ENCODE measurements at regions of chr1 and their contacts with region 1.

Region 1: GRCh38 chr1:61757945-61758344 is 15.7 kb downstream of the PATJ start:
- DNase-seq: no peak
- H3K4me3 ChIP-seq: no peak overlapping the region
- H3K27ac ChIP-seq: no peak overlapping the region; the same call in 1 of the 2 replicates
- H3K4me1 ChIP-seq: peaks cover 23% of the 10 kb centered on the region
- H3K27me3 ChIP-seq: no peaks in the 10 kb centered on the region
- CTCF ChIP-seq: no peak

Region 2: GRCh38 chr1:61404597-61405376 is 353.2 kb before region 1 on chr1:
- CTCF ChIA-PET with region 1: no interaction called
- POLR2A ChIA-PET with region 1: no interaction called
- intact Hi-C with region 1: loop called (anchors 5 kb)
- DNase-seq: no peak
- H3K4me3 ChIP-seq: no peak overlapping the region
- H3K27ac ChIP-seq: no peak overlapping the region
- H3K4me1 ChIP-seq: no peaks in the 10 kb centered on the region
- H3K27me3 ChIP-seq: no peaks in the 10 kb centered on the region
- CTCF ChIP-seq: no peak

Region 3: DNA sequence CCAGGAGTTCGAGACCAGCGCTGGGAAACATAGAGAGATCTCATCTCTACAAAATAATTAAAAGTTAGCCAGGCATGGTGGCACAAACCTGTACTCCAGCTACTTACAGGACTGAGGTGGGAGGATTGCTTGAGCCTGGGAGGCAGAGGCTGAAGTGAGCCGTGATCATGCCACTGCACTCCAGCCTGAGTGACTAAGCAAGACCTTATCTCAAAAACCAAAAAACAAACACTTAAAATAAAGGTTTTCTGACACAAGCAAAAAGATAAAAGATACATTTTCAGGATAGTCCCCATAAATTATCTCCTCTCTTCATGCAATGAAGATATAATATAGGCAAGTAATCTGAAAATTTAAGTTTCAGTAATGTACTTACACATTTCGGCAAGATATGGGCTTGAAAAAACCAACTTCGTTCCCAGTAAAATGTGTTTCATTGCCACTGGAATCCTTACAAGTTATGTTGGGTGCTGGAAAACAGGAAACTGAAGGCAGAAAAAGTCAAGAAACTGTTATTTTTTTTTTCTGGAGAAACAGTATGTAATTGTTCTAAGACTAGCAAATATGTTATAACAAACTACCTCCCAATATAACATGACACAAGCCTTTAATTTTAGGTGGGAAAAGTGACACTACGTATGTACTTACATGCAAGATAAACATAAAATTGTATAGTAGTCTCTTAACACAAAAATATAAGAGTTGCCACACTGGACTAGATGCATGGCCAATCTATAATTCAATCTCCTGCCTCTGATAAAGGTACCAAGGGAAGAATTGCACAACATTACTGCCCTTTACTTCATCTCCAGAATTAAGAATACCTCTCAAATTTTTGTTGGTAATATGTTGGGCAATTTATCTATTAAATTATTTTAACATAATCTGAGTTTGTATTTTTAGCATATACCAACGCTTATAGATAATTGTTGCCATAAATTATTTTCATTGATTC is 48.7 kb before region 1 on chr1:
- CTCF ChIA-PET with region 1: no interaction called
- POLR2A ChIA-PET with region 1: no interaction called
- intact Hi-C with region 1: loop called (anchors 5 kb)
- DNase-seq: no peak
- H3K4me3 ChIP-seq: no peak overlapping the region
- H3K27ac ChIP-seq: no peak overlapping the region
- H3K4me1 ChIP-seq: peaks cover 13% of the 10 kb centered on the region; the same call in 1 of the 2 replicates
- H3K27me3 ChIP-seq: no peaks in the 10 kb centered on the region
- CTCF ChIP-seq: no peak

Region 4: GRCh38 chr1:61808968-61809367 is 51.0 kb after region 1 on chr1:
- CTCF ChIA-PET with region 1: no interaction called
- POLR2A ChIA-PET with region 1: no interaction called
- intact Hi-C with region 1: loop called (anchors 5 kb)
- DNase-seq: no peak
- H3K4me3 ChIP-seq: no peak overlapping the region
- H3K27ac ChIP-seq: no peak overlapping the region
- H3K4me1 ChIP-seq: no peaks in the 10 kb centered on the region
- H3K27me3 ChIP-seq: no peaks in the 10 kb centered on the region
- CTCF ChIP-seq: no peak